ENCODE measurements at regions of chr15 and their contacts with region 1.

Region 1: GRCh38 chr15:34587717-34588674 is 4.5 kb upstream of the GOLGA8B start:
- DNase-seq: peak; percentile 30 to 58
- ATAC-seq: peak; percentile 72 to 81 (median 76)
- H3K4me3 ChIP-seq: peak overlapping the region; percentile 52
- H3K27ac ChIP-seq: no peak overlapping the region
- H3K4me1 ChIP-seq: no peaks in the 10 kb centered on the region
- H3K27me3 ChIP-seq: peaks cover 0 to 8% (median 0%) of the 10 kb centered on the region in 3 donors
- CTCF ChIP-seq: peak; percentile 78

Region 2: GRCh38 chr15:34514251-34514670 is 73.7 kb before region 1 on chr15:
- intact Hi-C with region 1: loop called in 1 of 2 experiments (anchors 10 kb)
- DNase-seq: peak; percentile 25 to 74
- ATAC-seq: peak; percentile 79 to 86 (median 84)
- H3K4me3 ChIP-seq: peak overlapping the region; percentile 91
- H3K27ac ChIP-seq: peak overlapping the region; percentile 53
- H3K4me1 ChIP-seq: peaks cover 8% of the 10 kb centered on the region
- H3K27me3 ChIP-seq: no peaks in the 10 kb centered on the region
- CTCF ChIP-seq: no peak

Region 3: DNA sequence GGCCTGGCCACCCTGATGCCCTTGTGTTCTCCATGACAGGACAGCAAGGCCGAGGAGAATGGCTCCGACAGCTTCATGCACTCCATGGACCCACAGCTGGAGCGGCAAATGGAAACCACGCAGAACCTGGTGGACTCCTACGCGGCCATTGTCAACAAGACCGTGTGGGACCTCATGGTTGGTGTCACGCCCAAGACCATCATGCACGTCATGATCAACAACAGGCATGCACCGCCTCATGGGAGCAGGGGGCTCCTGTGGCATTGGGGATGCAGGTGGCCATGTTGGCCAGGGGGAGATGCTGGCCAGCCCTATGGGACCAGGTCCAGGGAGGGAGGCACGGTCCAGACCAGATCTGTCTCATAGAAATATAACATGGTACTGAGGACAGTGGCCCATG is 67.4 kb before region 1 on chr15:
- intact Hi-C with region 1: loop called (anchors 10 kb)
- DNase-seq: no peak
- ATAC-seq: no peak
- H3K4me3 ChIP-seq: no peak overlapping the region
- H3K27ac ChIP-seq: no peak overlapping the region
- H3K4me1 ChIP-seq: no peaks in the 10 kb centered on the region
- H3K27me3 ChIP-seq: no peaks in the 10 kb centered on the region
- CTCF ChIP-seq: no peak

Measured in psoas muscle (tissue), 8 donors.